ENCODE measurements at regions of chr18 and their contacts with region 1.

Region 1: DNA sequence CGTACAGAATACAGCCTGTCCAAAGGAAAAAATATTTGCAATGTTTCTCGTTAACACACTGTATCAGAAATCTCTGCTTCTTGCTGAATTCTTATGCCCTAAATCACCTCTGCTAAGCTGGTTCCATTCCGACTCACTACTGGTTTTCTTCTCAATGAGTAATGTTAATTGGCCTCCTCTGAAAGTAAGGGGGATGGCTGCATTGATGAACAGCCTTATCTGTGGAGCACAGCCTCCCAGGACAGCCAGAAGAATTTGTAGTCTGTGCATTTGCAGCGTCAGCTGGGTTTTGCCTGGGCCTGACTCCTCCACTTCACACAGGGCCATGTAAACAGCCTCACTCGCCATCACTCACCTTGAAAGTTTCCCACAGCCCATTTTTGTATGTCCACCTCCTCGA is 127.7 kb downstream of the RNF152 start:
- DNase-seq: no peak
- ATAC-seq: no peak
- H3K4me3 ChIP-seq: no peak overlapping the region
- H3K27ac ChIP-seq: no peak overlapping the region
- H3K4me1 ChIP-seq: no peaks in the 10 kb centered on the region
- H3K27me3 ChIP-seq: no peaks in the 10 kb centered on the region
- CTCF ChIP-seq: no peak

Region 2: GRCh38 chr18:61855449-61856378 is 90.6 kb after region 1 on chr18:
- CTCF ChIA-PET with region 1: no interaction called
- POLR2A ChIA-PET with region 1: interaction called, 11 read pairs
- intact Hi-C with region 1: no loop called
- DNase-seq: no peak
- ATAC-seq: no peak
- H3K4me3 ChIP-seq: no peak overlapping the region
- H3K27ac ChIP-seq: no peak overlapping the region
- H3K4me1 ChIP-seq: no peaks in the 10 kb centered on the region
- H3K27me3 ChIP-seq: no peaks in the 10 kb centered on the region
- CTCF ChIP-seq: no peak